A673 (cell line): ENCODE measurements at regions of chr3 and their contacts with region 1.

Region 1: GRCh38 chr3:106711650-106712049 is 665.6 kb upstream of the CCDC54 start:
- DNase-seq: peak; percentile 32
- H3K4me3 ChIP-seq: no peak overlapping the region
- H3K27ac ChIP-seq: peak overlapping the region; percentile 75
- H3K4me1 ChIP-seq: peaks cover 35% of the 10 kb centered on the region
- H3K27me3 ChIP-seq: no peaks in the 10 kb centered on the region
- CTCF ChIP-seq: no peak

Region 2: DNA sequence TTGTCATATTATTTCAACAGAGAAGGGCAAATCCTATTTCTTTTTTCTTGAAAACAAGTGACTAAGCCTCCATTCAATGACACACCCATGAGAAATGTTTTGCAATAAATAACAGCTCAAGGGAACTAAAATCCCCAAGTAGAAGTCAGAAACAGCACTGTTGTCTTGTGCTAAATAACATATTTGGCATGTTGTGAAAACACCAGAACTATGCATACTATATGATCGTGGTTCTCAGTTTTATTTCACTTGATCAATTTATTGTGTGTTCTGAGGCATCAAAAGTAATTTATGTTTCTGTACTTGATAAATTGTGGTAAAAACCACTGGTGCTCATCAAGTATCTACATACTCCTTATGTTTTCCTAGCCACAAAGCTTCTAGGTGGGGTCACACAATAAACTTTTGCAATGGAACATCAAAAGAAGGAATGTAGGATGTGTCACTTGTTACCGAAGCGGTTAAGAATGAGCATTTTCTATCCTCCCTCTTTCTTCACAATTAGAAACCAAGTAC is 151.1 kb before region 1 on chr3:
- CTCF ChIA-PET with region 1: no interaction called
- POLR2A ChIA-PET with region 1: no interaction called
- intact Hi-C with region 1: no loop called
- DNase-seq: no peak
- H3K4me3 ChIP-seq: no peak overlapping the region
- H3K27ac ChIP-seq: no peak overlapping the region
- H3K4me1 ChIP-seq: no peaks in the 10 kb centered on the region
- H3K27me3 ChIP-seq: no peaks in the 10 kb centered on the region
- CTCF ChIP-seq: no peak

Region 3: GRCh38 chr3:106635271-106635670 is 76.4 kb before region 1 on chr3:
- CTCF ChIA-PET with region 1: no interaction called
- POLR2A ChIA-PET with region 1: no interaction called
- intact Hi-C with region 1: loop called (anchors 2 kb)
- DNase-seq: peak; percentile 59
- H3K4me3 ChIP-seq: no peak overlapping the region
- H3K27ac ChIP-seq: peak overlapping the region; percentile 74
- H3K4me1 ChIP-seq: peaks cover 33% of the 10 kb centered on the region
- H3K27me3 ChIP-seq: no peaks in the 10 kb centered on the region
- CTCF ChIP-seq: no peak

Region 4: DNA sequence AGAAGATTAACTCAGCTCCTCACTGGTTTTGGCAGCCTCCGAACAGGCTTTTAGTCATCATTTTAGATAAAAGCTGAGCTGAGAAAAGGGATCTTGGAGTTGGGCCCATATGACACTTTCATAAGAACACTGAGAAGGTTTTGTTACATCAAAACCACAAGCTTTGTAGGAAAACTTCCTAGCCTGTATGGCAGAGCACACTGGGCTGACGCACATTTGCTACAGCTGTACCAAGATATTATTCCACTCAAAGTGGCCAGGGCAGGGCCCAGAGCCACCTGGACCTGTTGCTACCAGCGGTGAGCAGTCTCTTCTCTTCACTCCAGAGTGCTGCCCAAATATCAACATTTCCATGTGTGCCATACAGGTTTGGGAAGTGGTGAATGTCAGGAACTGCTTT is 505.1 kb after region 1 on chr3:
- CTCF ChIA-PET with region 1: no interaction called
- POLR2A ChIA-PET with region 1: no interaction called
- intact Hi-C with region 1: no loop called
- DNase-seq: no peak
- H3K4me3 ChIP-seq: no peak overlapping the region
- H3K27ac ChIP-seq: no peak overlapping the region
- H3K4me1 ChIP-seq: no peaks in the 10 kb centered on the region
- H3K27me3 ChIP-seq: no peaks in the 10 kb centered on the region
- CTCF ChIP-seq: no peak

Region 5: DNA sequence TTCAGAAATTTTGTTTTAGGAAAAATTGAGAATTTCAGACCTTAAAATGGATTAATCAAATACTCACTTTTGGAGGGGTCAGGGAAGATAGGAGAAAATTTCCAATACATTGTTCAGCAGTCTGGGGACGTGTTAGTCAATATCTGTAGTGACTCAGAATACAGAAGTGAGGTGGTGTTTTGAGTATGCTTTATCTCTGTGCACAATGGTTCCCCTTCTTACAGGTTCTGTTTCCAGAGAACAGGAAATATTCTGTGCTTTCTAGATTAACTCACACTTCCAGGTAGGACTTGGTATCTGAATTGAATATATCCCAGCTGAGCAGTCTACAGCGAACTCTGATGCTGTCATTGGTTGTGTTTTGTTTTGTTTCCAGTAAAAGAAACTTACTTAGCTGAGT is 634.9 kb after region 1 on chr3:
- CTCF ChIA-PET with region 1: no interaction called
- POLR2A ChIA-PET with region 1: no interaction called
- intact Hi-C with region 1: no loop called
- DNase-seq: no peak
- H3K4me3 ChIP-seq: no peak overlapping the region
- H3K27ac ChIP-seq: no peak overlapping the region
- H3K4me1 ChIP-seq: no peaks in the 10 kb centered on the region
- H3K27me3 ChIP-seq: no peaks in the 10 kb centered on the region
- CTCF ChIP-seq: no peak

Region 6: GRCh38 chr3:107441617-107442016 is 730.0 kb after region 1 on chr3:
- CTCF ChIA-PET with region 1: no interaction called
- POLR2A ChIA-PET with region 1: no interaction called
- intact Hi-C with region 1: no loop called
- DNase-seq: no peak
- H3K4me3 ChIP-seq: no peak overlapping the region
- H3K27ac ChIP-seq: no peak overlapping the region
- H3K4me1 ChIP-seq: no peaks in the 10 kb centered on the region
- H3K27me3 ChIP-seq: no peaks in the 10 kb centered on the region
- CTCF ChIP-seq: no peak